HepG2 (cell line): ENCODE measurements at regions of chr10 and their contacts with region 1.

Region 1: DNA sequence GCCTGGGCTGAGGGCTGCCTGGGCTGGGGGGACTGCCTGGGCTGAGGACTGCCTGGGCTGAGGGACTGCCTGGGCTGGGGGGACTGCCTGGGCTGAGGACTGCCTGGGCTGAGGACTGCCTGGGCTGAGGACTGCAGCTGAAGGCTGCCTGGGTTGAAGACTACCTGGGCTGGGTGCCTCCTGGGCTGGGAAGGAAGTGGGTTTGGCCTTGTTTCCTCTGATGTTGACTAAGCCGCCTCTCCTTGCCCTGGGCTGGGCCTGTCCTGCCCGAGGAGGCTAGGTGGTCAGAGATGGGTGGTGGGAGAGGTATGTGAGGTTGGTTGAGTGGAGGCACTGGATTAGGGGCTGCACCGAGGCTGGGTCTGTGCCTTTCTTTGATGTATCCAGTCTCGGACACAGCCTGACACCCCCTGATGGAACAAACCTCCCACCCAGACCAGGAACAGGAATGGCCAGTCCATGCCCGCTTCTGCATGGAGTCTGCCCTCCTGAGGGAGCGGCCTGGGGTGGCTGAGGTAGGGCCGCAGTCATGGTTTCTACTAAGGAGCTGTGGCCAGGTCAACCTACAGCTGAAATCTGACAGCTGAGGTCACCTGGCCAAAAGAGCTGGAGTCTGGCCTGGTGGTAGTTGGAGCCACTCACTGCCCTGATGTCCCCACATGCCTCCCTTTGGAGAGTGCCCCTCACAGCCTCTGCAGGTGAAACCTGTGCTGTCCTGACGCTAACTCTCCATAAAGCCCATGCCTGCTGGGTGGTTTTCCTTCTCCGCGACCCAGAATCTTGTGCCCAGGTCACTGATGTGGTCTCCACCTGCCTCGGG is 22.3 kb downstream of the SCART1 start:
- DNase-seq: no peak
- ATAC-seq: peak; percentile 56
- H3K4me3 ChIP-seq: no peak overlapping the region
- H3K27ac ChIP-seq: no peak overlapping the region
- H3K4me1 ChIP-seq: peaks cover 9% of the 10 kb centered on the region
- H3K27me3 ChIP-seq: peaks cover 1 to 31% of the 10 kb centered on the region in 2 experiments; a peak in 4 of 5 replicates
- CTCF ChIP-seq: no peak
- EP300 ChIP-seq: no peak
- POLR2A ChIP-seq: no peak
- RAD21 ChIP-seq: no peak

Region 2: GRCh38 chr10:132961787-132962622 is 514.0 kb before region 1 on chr10:
- CTCF ChIA-PET with region 1: no interaction called
- POLR2A ChIA-PET with region 1: no interaction called
- in situ Hi-C with region 1: no loop called
- intact Hi-C with region 1: no loop called
- DNase-seq: peak; percentile 37
- ATAC-seq: peak; percentile 60
- H3K4me3 ChIP-seq: peak overlapping the region in 2 of 3 experiments; percentile 10 to 25; a peak in 2 of 6 replicates
- H3K27ac ChIP-seq: no peak overlapping the region
- H3K4me1 ChIP-seq: peaks cover 6% of the 10 kb centered on the region
- H3K27me3 ChIP-seq: peaks cover 12 to 67% of the 10 kb centered on the region in 2 experiments; a peak in 3 of 5 replicates
- CTCF ChIP-seq: no peak
- EP300 ChIP-seq: no peak
- POLR2A ChIP-seq: no peak
- RAD21 ChIP-seq: no peak

Region 3: DNA sequence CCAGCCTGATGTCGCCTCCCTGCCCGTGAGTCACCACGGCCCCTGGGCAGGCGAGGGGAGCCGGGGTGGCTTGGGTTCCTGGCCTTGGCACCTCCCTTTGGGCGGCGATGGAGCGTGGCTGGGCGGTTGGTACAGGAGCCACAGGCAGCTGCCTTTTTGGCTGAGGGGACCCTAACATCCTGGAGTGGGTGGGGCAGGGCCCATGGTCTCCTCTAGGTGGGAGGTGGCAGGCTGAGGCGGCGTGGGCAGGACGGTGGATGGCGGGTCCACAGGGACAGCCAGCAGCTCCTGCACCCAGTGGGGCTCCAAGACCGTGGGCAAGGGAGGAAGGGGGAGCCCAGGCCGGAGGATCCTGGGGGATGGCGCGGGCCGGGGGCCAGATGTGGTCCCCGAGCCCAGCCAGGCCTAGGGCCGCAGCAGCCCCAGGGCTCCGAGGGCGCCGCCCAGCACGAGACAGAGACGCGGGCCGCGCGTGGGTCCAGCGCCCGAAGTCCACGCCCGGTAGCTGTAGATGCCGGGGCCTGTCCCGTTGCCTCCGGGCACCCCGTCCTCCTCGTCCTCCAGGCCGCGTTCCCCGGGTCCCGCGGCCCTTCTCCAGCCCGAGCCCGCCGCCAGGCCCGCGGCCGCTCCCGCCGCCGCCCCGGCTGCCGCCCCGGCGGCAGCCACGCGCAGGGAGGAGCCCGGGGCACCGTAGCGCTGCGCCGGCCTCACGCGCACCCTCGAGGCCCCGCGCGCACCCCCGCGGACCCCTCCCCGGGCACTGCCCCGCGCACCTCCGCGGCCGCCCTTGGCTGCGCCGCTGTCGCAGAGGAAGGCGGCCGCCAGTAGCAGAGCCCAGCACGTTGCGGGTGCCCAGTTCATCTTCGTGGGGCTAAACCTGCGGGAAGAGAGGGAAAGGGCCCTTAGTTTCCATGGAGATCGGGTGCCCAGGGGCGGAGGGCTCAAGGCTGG is 52.9 kb before region 1 on chr10:
- CTCF ChIA-PET with region 1: no interaction called
- POLR2A ChIA-PET with region 1: no interaction called
- in situ Hi-C with region 1: no loop called
- intact Hi-C with region 1: no loop called
- DNase-seq: no peak
- ATAC-seq: peak; percentile 2; the same call in 2 of the 3 replicates
- H3K4me3 ChIP-seq: no peak overlapping the region
- H3K27ac ChIP-seq: no peak overlapping the region
- H3K4me1 ChIP-seq: no peaks in the 10 kb centered on the region
- H3K27me3 ChIP-seq: no peaks in the 10 kb centered on the region
- CTCF ChIP-seq: no peak
- EP300 ChIP-seq: no peak
- POLR2A ChIP-seq: no peak
- RAD21 ChIP-seq: no peak

Region 4: GRCh38 chr10:133520155-133520738 is 44.2 kb after region 1 on chr10:
- CTCF ChIA-PET with region 1: no interaction called
- POLR2A ChIA-PET with region 1: no interaction called
- in situ Hi-C with region 1: no loop called
- intact Hi-C with region 1: loop called (anchors 5 kb)
- DNase-seq: peak; percentile 76
- ATAC-seq: peak; percentile 100
- H3K4me3 ChIP-seq: peak overlapping the region; percentile 29 to 68 (median 47); a peak in 5 of 6 replicates
- H3K27ac ChIP-seq: peak overlapping the region; percentile 14
- H3K4me1 ChIP-seq: peaks cover 38% of the 10 kb centered on the region
- H3K27me3 ChIP-seq: peaks cover 0 to 4% of the 10 kb centered on the region in 2 experiments; a peak in 2 of 5 replicates
- CTCF ChIP-seq: peak; percentile 95
- EP300 ChIP-seq: no peak
- POLR2A ChIP-seq: peak; percentile 49 to 70; a peak in 3 of 4 replicates
- RAD21 ChIP-seq: peak; percentile 82